ENCODE measurements at regions of chr20 and their contacts with region 1.

Region 1: GRCh38 chr20:36624068-36624943 is 18.7 kb downstream of the RAB5IF start:
- DNase-seq: no peak
- CTCF ChIP-seq: no peak

Region 2: DNA sequence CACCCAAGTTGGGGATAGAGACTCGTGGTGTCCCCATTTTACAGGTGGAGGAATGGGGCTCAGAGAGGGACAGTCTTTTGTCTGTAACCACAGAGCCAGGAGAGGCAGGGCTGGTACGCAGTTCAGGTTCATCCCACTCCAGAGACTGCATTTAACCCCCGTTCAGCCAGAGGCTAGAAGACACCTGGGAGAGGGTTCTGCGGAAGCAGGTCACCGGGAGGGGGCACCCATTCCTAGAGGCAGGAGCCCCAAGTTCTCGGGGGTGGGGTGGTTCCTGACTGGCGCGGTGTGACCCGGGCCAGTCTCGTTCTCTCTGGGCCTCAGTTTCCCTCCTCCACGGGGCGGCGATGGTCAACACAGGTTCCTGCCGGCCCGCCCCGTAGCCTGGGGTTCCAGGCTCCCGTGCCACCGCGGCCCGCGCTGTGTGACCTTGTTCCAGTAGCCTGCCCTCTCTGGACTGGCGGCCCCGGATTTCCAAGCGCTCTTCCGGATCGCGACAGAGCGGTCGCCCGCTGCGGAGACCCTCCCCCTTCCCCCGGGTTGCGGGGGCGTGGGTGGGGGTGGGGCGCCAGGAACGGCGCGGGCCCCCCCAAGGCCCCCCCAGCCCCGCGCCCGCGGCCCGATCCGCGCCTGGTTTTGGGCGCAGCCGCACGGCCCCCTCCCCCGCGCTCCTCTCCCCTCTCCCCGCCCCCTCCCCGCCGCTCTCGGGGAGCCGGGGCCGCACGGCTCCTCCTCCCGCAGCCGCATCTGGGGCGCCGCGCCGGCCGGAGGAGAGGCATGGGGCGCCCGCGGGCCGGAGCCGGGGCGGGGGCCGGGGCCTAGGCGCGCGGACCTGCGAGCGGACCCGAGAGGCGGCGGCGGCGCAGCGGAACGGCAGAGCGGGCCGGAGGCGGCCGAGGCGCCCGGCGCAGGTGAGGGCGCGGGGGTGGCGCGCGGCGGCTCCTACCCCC is 318.4 kb before region 1 on chr20 and contains the start of gene DLGAP4:
- CTCF ChIA-PET with region 1: no interaction called
- POLR2A ChIA-PET with region 1: no interaction called
- DNase-seq: peak; percentile 14
- CTCF ChIP-seq: no peak

Region 3: DNA sequence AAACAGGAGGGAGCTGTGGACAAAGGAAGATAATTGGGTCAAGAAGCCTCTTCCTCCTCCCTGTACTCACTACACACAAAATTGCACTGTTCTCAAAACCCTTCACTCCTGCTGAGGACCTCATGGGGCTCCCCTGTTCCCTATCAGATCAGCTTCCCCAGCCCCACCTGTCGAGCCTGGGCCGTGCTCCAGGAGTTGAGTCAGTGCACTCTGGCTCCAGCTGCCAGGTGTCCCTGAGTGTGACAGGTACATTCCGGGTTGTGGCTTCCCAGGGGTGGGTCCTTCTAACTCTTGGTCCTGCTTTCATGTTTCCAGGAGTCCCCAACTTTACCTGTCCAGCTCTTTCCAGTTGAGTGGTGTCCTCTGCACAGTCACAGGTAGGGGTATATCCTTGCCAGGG is 10.3 kb before region 1 on chr20:
- CTCF ChIA-PET with region 1: interaction called, 15 read pairs
- POLR2A ChIA-PET with region 1: interaction called, 3 read pairs
- DNase-seq: no peak
- CTCF ChIP-seq: no peak

Measured in GM10248 (cell line).